ENCODE measurements at regions of chr13 and their contacts with region 1.

Region 1: DNA sequence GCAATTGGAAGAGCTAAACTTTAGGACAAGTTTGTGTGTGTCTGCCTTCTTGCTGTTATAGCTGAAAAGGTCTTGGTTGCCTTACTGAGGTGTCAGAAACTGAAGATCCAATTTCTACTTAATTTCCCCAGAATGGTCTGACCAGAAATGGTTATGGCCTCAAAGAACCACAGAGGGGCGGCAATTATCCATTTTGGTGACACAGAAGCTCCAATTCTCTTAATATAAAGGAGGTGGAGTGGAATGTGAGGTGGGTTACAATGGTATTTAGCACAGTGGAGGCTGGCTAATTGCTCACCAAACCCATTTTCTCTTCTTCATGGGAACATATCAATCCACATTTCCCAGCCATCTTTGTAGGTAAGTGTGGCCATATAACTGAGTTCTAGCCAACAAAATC is 1157.2 kb downstream of the OLFM4 start:
- DNase-seq: peak; percentile 25
- ATAC-seq: peak; percentile 38; the same call in 1 of the 2 replicates
- H3K4me3 ChIP-seq: no peak overlapping the region
- H3K27ac ChIP-seq: no peak overlapping the region
- H3K4me1 ChIP-seq: no peaks in the 10 kb centered on the region
- H3K27me3 ChIP-seq: no peaks in the 10 kb centered on the region
- CTCF ChIP-seq: peak; percentile 43; the same call in 1 of the 2 replicates

Region 2: GRCh38 chr13:54433493-54434206 is 247.9 kb after region 1 on chr13:
- CTCF ChIA-PET with region 1: no interaction called
- POLR2A ChIA-PET with region 1: no interaction called
- intact Hi-C with region 1: loop called (anchors 10 kb)
- DNase-seq: no peak
- ATAC-seq: no peak
- H3K4me3 ChIP-seq: no peak overlapping the region
- H3K27ac ChIP-seq: no peak overlapping the region
- H3K4me1 ChIP-seq: no peaks in the 10 kb centered on the region
- H3K27me3 ChIP-seq: no peaks in the 10 kb centered on the region
- CTCF ChIP-seq: no peak

Region 3: GRCh38 chr13:54536112-54536511 is 350.3 kb after region 1 on chr13:
- CTCF ChIA-PET with region 1: no interaction called
- POLR2A ChIA-PET with region 1: no interaction called
- intact Hi-C with region 1: loop called (anchors 5 kb)
- DNase-seq: peak; percentile 2
- ATAC-seq: no peak
- H3K4me3 ChIP-seq: no peak overlapping the region
- H3K27ac ChIP-seq: no peak overlapping the region
- H3K4me1 ChIP-seq: no peaks in the 10 kb centered on the region
- H3K27me3 ChIP-seq: no peaks in the 10 kb centered on the region
- CTCF ChIP-seq: peak; percentile 40

Measured in PC-3 (cell line).